PC-9 (cell line): ENCODE measurements at regions of chr1 and their contacts with region 1.

Region 1: DNA sequence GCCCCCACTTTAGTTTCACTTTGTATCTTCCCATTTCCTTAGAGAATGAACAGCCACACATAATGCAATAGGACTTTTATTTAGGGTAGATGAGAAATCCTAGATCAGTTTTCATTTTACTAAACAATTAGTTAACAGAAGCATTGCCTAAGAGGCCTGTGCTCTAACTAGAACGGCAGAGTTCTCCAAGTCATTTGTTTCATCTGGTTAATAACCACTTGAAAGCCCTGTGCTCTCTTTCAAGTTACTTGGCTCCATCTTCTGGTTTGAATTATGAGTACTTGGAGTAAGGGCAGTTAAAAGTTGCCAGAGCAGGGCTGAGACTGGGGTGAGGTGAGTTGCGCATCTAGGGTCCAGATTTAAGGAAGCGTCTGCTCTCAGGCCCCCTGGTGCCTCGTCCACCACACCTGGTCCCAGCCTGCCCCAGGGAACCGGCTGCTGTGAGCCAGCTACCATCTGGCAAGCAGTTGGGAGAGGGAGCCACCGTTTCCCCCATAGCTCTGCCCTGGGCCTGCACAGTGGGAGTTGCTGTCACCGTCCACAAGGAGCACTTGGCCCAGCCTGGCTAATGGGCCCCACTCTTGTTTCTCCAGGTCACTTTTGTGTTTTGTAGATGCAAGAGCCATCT is 18.1 kb upstream of the SLC44A3 start:
- DNase-seq: peak; percentile 48 to 93
- H3K4me3 ChIP-seq: peak overlapping the region; percentile 22; the same call in 1 of the 2 replicates
- H3K27ac ChIP-seq: peak overlapping the region; percentile 79
- H3K4me1 ChIP-seq: peaks cover 24% of the 10 kb centered on the region
- H3K27me3 ChIP-seq: no peaks in the 10 kb centered on the region
- CTCF ChIP-seq: peak; percentile 85

Region 2: DNA sequence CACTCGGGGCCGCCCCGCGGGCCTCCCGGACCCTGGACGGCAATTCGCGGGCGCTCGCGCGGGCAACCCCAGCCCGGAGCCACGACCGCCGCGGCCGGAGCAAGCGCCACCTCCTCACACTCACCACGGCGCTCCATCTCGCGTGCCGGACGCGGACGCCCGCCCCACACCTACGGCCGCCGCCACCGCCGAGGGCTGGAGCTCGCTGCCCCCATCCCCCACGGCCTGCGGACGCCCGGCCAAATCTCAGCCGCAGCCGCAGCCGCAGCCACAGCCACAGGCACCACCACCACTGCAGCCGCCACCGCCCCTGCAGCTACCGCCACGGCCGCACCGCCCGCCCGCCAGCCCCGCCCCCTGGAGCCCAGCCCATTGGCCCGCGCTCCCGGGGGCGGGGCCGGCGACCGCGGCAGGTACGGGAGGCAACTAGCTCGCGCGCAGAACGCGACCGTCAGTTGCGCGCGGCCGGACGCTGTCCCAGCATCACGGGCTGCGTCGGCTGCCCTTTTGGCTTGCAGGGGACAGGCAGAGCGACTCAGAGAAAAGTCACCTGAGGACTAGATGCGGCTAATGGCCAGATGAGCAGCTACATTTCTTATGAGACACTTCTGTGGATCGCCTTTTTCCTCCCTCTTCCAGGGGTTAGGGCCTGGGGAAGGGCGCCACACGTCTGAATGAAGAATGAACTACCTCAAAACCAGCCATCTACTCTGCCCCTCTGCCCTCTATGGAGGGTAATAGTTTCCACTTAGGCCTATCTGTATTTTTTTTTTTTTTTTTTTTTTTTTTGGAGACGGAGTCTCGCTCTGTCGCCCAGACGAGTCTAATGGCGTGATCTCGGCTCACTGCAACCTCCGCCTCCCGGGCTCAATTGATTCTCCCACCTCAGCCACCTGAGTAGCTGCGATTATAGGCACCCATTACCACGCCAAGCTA is 564.5 kb before region 1 on chr1 and contains the start of gene ARHGAP29:
- CTCF ChIA-PET with region 1: no interaction called
- POLR2A ChIA-PET with region 1: no interaction called
- intact Hi-C with region 1: loop called (anchors 10 kb)
- DNase-seq: peak; percentile 88 to 91
- H3K4me3 ChIP-seq: peak within 1 kb of the TSS; percentile 87
- H3K27ac ChIP-seq: peak within 1 kb of the TSS; percentile 85
- H3K4me1 ChIP-seq: peaks cover 70% of the 10 kb centered on the region
- H3K27me3 ChIP-seq: no peaks in the 10 kb centered on the region
- CTCF ChIP-seq: no peak
- total RNA-seq, gene ARHGAP29: 123 and 137 TPM in 2 replicates

Region 3: DNA sequence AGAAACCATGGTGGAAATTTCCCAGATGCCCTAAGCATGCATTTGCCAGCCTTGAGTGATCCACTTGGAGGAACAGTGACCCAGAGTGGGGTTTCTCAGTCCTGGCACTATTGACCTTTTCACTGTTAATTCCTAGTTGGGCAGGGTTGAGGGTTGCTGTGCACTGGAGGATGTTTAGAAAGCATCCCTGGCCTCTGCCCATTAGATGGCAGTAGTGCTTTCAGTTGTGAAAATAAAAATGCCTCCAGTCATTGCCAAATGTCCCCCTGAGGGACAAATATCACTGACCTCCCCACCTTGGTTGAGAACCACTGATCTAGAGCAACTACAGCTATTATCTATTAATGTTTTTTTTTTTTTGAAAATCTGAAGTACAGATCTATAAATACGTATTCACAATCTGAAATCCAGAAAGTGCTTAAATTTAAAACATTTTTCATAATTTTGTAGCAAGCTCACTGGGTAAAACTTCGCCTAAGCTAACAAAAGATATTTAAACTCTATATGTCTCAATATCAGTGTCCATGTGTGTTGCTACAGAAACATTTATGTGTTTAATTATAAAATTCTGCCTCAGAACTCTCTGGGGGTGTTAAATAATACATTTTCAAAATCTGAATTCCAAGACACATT is 287.8 kb before region 1 on chr1:
- CTCF ChIA-PET with region 1: interaction called, 5 read pairs
- POLR2A ChIA-PET with region 1: interaction called, 10 read pairs
- intact Hi-C with region 1: loop called (anchors 2 kb)
- DNase-seq: peak; percentile 34 to 66
- H3K4me3 ChIP-seq: no peak overlapping the region
- H3K27ac ChIP-seq: peak overlapping the region; percentile 21; the same call in 1 of the 2 replicates
- H3K4me1 ChIP-seq: peaks cover 11% of the 10 kb centered on the region
- H3K27me3 ChIP-seq: no peaks in the 10 kb centered on the region
- CTCF ChIP-seq: peak; percentile 91

Region 4: GRCh38 chr1:94541175-94542087 is 260.6 kb before region 1 on chr1 and contains the start of gene F3:
- CTCF ChIA-PET with region 1: no interaction called
- POLR2A ChIA-PET with region 1: no interaction called
- intact Hi-C with region 1: loop called (anchors 5 kb)
- DNase-seq: peak; percentile 93 to 98
- H3K4me3 ChIP-seq: peak within 1 kb of the TSS; percentile 80
- H3K27ac ChIP-seq: peak within 1 kb of the TSS; percentile 87
- H3K4me1 ChIP-seq: peaks cover 67% of the 10 kb centered on the region
- H3K27me3 ChIP-seq: no peaks in the 10 kb centered on the region
- CTCF ChIP-seq: no peak; the same call in 1 of the 2 replicates
- total RNA-seq, gene F3: 335 and 434 TPM in 2 replicates

Region 5: GRCh38 chr1:94648225-94649007 is 153.6 kb before region 1 on chr1:
- CTCF ChIA-PET with region 1: no interaction called
- POLR2A ChIA-PET with region 1: interaction called, 5 read pairs
- intact Hi-C with region 1: loop called (anchors 1 kb)
- DNase-seq: peak; percentile 79 to 100
- H3K4me3 ChIP-seq: peak overlapping the region; percentile 32; the same call in 1 of the 2 replicates
- H3K27ac ChIP-seq: peak overlapping the region; percentile 97
- H3K4me1 ChIP-seq: peaks cover 84% of the 10 kb centered on the region
- H3K27me3 ChIP-seq: no peaks in the 10 kb centered on the region
- CTCF ChIP-seq: no peak

Region 6: GRCh38 chr1:94773931-94774422 is 28.1 kb before region 1 on chr1:
- CTCF ChIA-PET with region 1: no interaction called
- POLR2A ChIA-PET with region 1: interaction called, 16 read pairs
- intact Hi-C with region 1: loop called (anchors 1 kb)
- DNase-seq: peak; percentile 48 to 92
- H3K4me3 ChIP-seq: no peak overlapping the region
- H3K27ac ChIP-seq: peak overlapping the region; percentile 85
- H3K4me1 ChIP-seq: peaks cover 69% of the 10 kb centered on the region
- H3K27me3 ChIP-seq: no peaks in the 10 kb centered on the region
- CTCF ChIP-seq: no peak

Region 7: DNA sequence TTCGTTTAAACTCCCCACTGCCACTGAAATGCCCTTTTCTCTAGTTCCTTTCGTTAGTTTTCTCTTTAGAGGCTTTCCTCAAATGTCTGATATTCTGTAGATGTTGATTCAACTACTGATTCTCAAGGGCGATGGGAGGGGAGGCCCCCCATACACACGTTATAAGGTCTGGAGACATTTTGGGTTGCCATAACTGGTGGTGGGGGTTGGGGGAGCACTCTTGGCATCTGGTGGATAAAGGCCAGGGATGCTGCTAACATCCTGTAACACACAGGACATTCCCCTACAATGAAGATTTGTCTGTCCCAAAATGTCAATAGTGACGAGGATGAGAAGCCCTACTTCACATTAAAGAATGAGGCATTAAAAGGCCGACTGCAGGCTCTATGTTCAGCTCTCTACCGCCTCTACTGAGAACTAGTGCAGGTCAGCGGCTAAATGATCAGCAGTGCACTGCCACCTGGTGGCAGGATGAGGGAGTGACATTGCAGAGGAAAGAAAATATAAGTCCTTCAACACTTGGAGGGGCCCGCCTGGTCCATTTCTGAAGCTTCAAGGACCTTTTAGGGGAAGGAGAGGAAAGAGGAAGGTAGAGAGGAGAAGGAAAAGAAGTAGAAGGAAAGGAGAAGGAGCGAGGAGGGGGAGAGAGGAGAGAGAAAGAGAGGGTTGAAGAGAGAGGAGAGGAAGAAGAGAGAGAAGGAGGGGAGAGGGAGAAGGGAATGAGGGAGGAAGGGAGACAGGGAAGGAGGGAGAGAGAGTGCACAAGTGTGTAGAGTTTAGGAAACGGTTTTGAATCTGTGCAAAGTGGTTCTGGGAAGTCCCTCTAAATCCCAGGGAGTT is 241.3 kb after region 1 on chr1:
- CTCF ChIA-PET with region 1: interaction called, 4 read pairs
- POLR2A ChIA-PET with region 1: no interaction called
- intact Hi-C with region 1: loop called (anchors 1 kb)
- DNase-seq: peak; percentile 74 to 77
- H3K4me3 ChIP-seq: no peak overlapping the region
- H3K27ac ChIP-seq: no peak overlapping the region
- H3K4me1 ChIP-seq: peaks cover 32% of the 10 kb centered on the region
- H3K27me3 ChIP-seq: no peaks in the 10 kb centered on the region
- CTCF ChIP-seq: peak; percentile 100